Tibial artery (tissue), 4 donors: ENCODE measurements at regions of chr11 and their contacts with region 1.

Region 1: GRCh38 chr11:86919557-86920210 is 35.5 kb downstream of the FZD4 start:
- DNase-seq: peak in 1 of 2 donors; percentile 33
- H3K4me3 ChIP-seq: no peak overlapping the region
- H3K27ac ChIP-seq: peak overlapping the region; percentile 65 to 72
- H3K4me1 ChIP-seq: peaks cover 0 to 69% (median 41%) of the 10 kb centered on the region in 4 donors
- H3K27me3 ChIP-seq: no peaks in the 10 kb centered on the region
- CTCF ChIP-seq: peak; percentile 62 to 71

Region 2: DNA sequence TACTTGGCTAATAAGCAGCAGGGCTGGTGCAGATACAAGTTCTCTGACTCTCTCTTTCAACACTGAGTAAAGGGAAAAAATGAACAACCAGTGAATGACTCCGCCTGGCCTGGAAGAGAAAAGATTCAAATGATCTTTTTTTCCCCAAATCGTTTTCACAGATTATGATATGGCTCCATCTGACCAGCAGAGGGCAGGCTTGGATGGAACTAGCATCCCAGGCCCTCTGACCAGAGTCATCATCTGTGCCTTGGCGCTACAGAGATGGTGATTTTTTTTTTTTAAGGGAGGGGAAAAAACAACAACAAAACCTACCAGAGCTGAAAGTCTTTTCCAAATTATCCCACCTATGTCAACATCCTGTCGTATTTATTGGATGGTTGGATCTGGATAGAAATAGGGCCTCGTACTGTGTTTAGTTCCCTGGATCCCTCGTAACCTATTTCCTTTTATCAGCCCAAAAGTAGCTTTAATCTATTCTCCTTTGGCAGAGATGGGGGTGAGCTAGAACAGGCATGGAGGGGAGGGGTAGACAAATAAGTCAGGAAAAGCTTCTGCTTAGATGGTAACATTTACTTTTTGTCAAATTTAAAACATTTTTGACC is 49.6 kb before region 1 on chr11:
- intact Hi-C with region 1: loop called (anchors 2 kb)
- DNase-seq: peak; percentile 78 to 82
- H3K4me3 ChIP-seq: no peak overlapping the region
- H3K27ac ChIP-seq: peak overlapping the region; percentile 17 to 19
- H3K4me1 ChIP-seq: peaks cover 0 to 14% (median 0%) of the 10 kb centered on the region in 4 donors
- H3K27me3 ChIP-seq: no peaks in the 10 kb centered on the region
- CTCF ChIP-seq: peak; percentile 78 to 84